Endothelial cell of umbilical vein (primary cell): ENCODE measurements at regions of chr9 and their contacts with region 1.

Region 1: DNA sequence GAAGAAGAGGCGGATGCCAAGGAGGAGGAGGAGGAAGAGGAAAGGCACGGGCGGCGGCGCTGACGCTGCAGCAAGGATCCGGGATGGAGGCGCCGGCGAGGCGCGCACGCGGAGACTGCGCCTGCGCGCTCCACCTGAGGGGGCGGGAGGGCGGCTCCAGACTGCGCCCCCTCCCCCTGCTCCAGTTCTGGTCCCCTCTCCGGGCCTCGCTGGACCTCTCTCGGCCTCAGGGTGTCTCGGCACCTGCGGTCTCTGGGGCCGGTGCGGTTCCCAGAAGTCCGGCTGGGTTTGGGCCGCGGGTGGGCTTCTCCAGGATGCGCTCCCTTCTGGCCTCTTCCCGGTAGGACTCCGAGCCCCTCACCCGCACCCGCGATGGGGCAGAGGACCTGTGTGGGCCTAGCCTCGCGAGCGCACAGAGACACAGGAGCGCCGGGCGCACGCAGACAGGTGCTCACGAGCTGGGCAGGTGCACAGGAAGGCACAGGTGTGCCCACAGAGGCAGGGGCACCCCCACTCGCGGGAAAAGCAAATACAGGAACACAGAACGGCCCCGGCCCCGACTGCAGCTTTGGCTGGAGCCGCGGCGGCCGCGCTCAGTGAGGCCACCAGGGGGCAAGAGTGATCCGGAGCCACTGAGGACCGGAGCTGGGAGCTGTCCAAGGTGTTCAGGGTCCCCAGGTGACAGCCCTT is at the start of gene NPDC1:
- DNase-seq: peak; percentile 79
- H3K4me3 ChIP-seq: peak within 1 kb of the TSS; percentile 44 to 57 (median 54)
- H3K27ac ChIP-seq: peak within 1 kb of the TSS; percentile 41
- H3K4me1 ChIP-seq: peaks cover 35% of the 10 kb centered on the region
- H3K27me3 ChIP-seq: peaks cover 0 to 3% of the 10 kb centered on the region in 2 experiments
- CTCF ChIP-seq: peak; percentile 94 to 96
- POLR2A ChIP-seq: peak; percentile 63
- total RNA-seq, gene NPDC1: 157 and 181 TPM in 2 replicates

Region 2: DNA sequence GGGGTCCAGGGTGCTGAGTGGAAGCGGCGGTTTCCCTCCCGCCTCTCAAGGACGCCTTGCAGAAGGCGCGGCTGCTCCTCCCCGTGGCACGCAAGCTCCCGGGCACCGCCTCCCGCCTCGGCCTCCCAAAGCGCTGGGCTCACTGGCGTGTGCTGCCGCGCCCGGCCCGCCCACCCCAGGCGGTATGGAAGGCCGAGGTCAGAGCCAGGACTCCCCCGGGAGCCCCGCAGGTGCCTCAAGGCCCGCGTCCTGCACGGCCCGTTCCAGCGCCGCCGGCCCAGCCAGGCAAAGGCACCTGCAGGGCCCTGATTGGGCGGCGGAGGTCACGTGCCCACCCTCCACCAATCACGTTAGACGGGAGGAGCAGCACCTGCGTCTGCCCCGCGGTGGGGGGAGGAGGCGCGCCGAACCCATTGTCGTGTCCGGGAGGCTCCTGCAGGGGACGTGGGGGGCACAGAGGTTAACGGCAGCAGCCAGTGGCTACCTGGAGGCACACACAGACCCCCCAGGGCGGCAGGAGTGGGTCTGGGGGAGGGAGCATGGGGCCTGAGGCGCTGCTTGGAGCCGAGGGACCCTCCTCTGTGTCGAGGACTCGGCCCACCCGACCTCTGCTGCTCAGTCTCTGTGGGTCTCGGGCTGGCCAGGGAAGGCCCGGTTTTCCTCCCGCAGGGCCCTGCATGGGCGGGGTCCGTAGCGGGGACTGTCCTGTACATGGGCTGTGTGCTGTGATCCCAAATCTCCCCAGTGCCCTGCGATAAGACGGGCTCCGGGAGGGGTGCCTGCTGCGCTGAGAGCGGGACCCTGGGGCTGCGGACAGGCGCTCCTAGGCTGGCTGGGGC is 96.2 kb before region 1 on chr9:
- CTCF ChIA-PET with region 1: interaction called, 10 read pairs
- POLR2A ChIA-PET with region 1: no interaction called
- dilution Hi-C with region 1: no loop called
- intact Hi-C with region 1: no loop called
- DNase-seq: peak; percentile 93
- H3K4me3 ChIP-seq: peak overlapping the region; percentile 4 to 77 (median 9)
- H3K27ac ChIP-seq: no peak overlapping the region
- H3K4me1 ChIP-seq: peaks cover 5% of the 10 kb centered on the region
- H3K27me3 ChIP-seq: no peaks in the 10 kb centered on the region
- CTCF ChIP-seq: no peak
- POLR2A ChIP-seq: peak; percentile 57

Region 3: DNA sequence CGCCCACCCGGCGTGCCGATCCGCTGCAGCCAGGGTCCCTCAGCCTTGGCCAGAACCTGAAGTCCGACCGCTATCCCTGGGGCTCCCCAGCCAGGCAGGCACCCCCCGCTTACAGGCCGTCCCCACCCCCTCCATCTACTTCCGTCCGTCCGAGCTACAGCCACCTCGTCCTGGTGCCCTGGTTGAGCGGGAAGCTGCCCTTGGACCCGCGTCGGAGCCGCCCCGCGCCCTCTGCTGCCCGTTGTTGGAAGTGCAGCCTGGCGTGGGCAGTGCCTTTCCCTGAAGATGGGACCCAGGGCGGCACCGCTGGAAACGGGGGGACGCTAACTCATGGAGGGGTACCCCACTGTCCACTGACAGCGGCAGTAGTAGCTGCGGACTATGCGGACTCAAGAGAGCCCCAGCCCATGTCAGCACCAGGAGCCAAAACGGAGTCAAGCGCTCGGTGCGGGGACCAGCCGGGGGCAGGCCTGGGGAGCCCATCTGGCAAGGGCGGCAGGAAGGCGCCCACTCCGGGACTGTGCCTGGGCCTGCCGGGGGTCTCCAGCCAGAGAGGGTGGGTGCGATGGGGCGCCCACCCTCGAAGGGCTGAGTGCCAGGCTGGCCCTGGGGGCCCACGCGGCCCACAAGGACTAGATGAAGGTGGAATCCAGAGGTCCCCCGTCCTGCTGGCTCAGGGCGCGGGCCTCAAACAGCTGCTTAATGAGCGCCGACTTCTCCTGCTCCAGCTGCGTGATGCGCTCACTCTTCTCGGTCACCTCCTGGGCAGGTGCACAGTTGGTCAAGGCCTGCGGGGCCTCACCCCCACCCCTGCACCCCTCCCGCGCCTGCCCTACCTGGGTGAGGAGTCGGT is 18.0 kb after region 1 on chr9:
- CTCF ChIA-PET with region 1: interaction called, 152 read pairs
- POLR2A ChIA-PET with region 1: interaction called, 4 read pairs
- dilution Hi-C with region 1: no loop called
- intact Hi-C with region 1: loop called (anchors 1 kb)
- DNase-seq: peak; percentile 31
- H3K4me3 ChIP-seq: no peak overlapping the region
- H3K27ac ChIP-seq: no peak overlapping the region
- H3K4me1 ChIP-seq: peaks cover under 1% of the 10 kb centered on the region
- H3K27me3 ChIP-seq: no peaks in the 10 kb centered on the region
- CTCF ChIP-seq: peak; percentile 86 to 97
- POLR2A ChIP-seq: no peak

Region 4: DNA sequence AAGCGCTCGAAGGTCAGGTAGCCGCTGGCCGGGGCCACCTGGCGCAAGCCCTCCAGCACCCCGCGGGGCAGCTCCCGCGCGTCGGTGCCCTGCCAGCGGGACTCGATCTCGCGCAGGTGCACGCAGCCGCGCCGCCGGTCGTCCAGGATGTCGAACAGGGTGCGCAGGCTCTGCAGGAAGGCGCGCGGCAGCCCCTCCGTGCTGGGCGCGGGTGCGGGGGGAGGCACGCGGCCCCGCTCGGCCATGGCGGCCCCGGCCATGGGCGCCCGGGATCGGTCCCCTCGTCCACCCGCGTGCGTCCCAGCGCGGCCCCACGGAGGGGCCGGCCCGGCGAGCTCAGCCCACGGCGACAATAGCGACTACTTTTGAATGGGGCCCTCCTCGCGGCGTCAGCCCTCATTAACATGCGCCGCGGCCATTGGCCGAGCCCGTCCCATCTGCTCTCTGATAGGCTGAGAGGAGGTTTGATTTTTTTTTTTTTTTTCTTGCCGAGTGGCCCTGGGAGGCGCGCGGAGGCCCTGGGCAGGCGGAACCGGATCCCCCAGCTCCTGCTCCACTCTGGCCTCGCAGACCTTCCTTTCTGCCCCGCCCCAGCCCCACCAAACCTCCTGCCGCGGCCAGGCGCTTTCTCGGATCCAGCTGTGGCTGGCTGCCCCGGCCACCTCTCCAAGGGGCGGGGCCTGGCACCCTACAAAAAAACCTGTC is 24.1 kb after region 1 on chr9 and contains the start of gene SAPCD2:
- CTCF ChIA-PET with region 1: interaction called, 152 read pairs
- POLR2A ChIA-PET with region 1: no interaction called
- dilution Hi-C with region 1: no loop called
- intact Hi-C with region 1: loop called (anchors 1 kb)
- DNase-seq: peak; percentile 84
- H3K4me3 ChIP-seq: peak within 1 kb of the TSS; percentile 37 to 49 (median 39)
- H3K27ac ChIP-seq: no peak within 1 kb of the TSS
- H3K4me1 ChIP-seq: peaks cover 11% of the 10 kb centered on the region
- H3K27me3 ChIP-seq: no peaks in the 10 kb centered on the region
- CTCF ChIP-seq: no peak
- POLR2A ChIP-seq: peak; percentile 75
- total RNA-seq, gene SAPCD2: 24.3 and 27.8 TPM in 2 replicates

Region 5: GRCh38 chr9:137077010-137077747 is 30.9 kb after region 1 on chr9 and contains the start of gene UAP1L1:
- CTCF ChIA-PET with region 1: interaction called, 152 read pairs
- POLR2A ChIA-PET with region 1: no interaction called
- dilution Hi-C with region 1: no loop called
- intact Hi-C with region 1: no loop called
- DNase-seq: peak; percentile 43
- H3K4me3 ChIP-seq: peak within 1 kb of the TSS; percentile 54 to 88 (median 60)
- H3K27ac ChIP-seq: no peak within 1 kb of the TSS
- H3K4me1 ChIP-seq: peaks cover 5% of the 10 kb centered on the region
- H3K27me3 ChIP-seq: no peaks in the 10 kb centered on the region
- CTCF ChIP-seq: no peak
- POLR2A ChIP-seq: peak; percentile 71
- total RNA-seq, gene UAP1L1: 38.1 and 41.7 TPM in 2 replicates

Region 6: DNA sequence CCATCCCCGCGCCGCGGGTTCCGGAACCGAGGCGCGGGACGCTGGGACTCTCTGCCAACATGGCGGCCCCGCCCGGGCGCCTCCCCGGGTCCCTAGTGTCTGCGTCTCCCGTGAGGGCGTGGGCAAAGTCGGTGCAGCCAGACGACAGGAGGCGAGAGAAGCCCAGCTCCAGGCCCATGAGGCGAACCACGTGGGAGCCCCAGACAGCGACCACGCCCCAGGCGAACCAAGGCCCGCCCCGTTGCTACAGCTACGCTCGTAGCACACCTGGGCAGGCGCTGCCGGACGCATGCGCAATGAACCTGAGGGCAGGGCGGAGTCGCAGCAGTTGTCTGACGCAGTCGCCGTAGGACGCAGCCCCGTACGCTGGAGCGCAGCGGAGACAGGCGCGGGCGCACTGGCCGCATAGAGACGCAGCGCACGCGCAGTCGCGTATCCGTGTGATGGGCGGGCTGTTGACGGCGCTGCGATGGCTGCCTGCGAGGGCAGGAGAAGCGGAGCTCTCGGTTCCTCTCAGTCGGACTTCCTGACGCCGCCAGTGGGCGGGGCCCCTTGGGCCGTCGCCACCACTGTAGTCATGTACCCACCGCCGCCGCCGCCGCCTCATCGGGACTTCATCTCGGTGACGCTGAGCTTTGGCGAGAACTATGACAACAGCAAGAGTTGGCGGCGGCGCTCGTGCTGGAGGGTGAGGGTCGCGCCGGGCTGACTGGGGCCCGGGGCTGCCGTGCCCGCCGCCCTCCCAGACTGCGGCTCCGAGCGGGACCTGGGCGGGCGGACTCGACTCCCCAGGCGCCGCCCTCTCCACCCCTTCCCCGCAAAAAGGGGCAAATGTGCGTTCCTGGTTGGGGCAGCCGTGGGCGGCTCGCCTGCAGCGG is 40.5 kb after region 1 on chr9 and contains the start of gene MAN1B1:
- CTCF ChIA-PET with region 1: interaction called, 7 read pairs
- POLR2A ChIA-PET with region 1: interaction called, 3 read pairs
- dilution Hi-C with region 1: no loop called
- intact Hi-C with region 1: loop called (anchors 1 kb)
- DNase-seq: peak; percentile 100
- H3K4me3 ChIP-seq: peak within 1 kb of the TSS; percentile 42 to 62 (median 47)
- H3K27ac ChIP-seq: peak within 1 kb of the TSS; percentile 48
- H3K4me1 ChIP-seq: peaks cover 28% of the 10 kb centered on the region
- H3K27me3 ChIP-seq: no peaks in the 10 kb centered on the region
- CTCF ChIP-seq: no peak
- POLR2A ChIP-seq: peak; percentile 89
- total RNA-seq, gene MAN1B1: 67.7 and 75.3 TPM in 2 replicates

Region 7: GRCh38 chr9:137168905-137169856 is 122.9 kb after region 1 on chr9:
- CTCF ChIA-PET with region 1: no interaction called
- POLR2A ChIA-PET with region 1: no interaction called
- dilution Hi-C with region 1: no loop called
- intact Hi-C with region 1: no loop called
- DNase-seq: peak; percentile 39
- H3K4me3 ChIP-seq: peak overlapping the region in 2 of 3 experiments; percentile 5 to 10
- H3K27ac ChIP-seq: no peak overlapping the region
- H3K4me1 ChIP-seq: no peaks in the 10 kb centered on the region
- H3K27me3 ChIP-seq: peaks cover 23 to 29% of the 10 kb centered on the region in 2 experiments
- CTCF ChIP-seq: no peak
- POLR2A ChIP-seq: no peak